Transverse colon (tissue), 4 donors: ENCODE measurements at regions of chr9 and their contacts with region 1.

Region 1: GRCh38 chr9:91949946-91950664 is at the start of gene ROR2:
- DNase-seq: peak; percentile 75
- H3K4me3 ChIP-seq: peak within 1 kb of the TSS; percentile 49 to 91 (median 59)
- H3K27ac ChIP-seq: peak within 1 kb of the TSS; percentile 81 to 94 (median 88)
- H3K4me1 ChIP-seq: peaks cover 5 to 42% (median 31%) of the 10 kb centered on the region in 4 donors
- H3K27me3 ChIP-seq: peaks cover 62% of the 10 kb centered on the region
- CTCF ChIP-seq: peak; percentile 26 to 61 (median 48)
- EP300 ChIP-seq: no peak
- POLR2A ChIP-seq: no peak
- total RNA-seq, gene ROR2: 4.2 to 23.2 (median 11.2) TPM

Region 2: GRCh38 chr9:91727316-91727861 is 222.7 kb before region 1 on chr9:
- in situ Hi-C with region 1: loop called in 1 of 4 experiments (anchors 25 kb)
- intact Hi-C with region 1: no loop called
- DNase-seq: no peak
- H3K4me3 ChIP-seq: no peak overlapping the region
- H3K27ac ChIP-seq: peak overlapping the region in 3 of 4 donors; percentile 0 to 18 (median 1)
- H3K4me1 ChIP-seq: peaks cover 0 to 3% (median 1%) of the 10 kb centered on the region in 4 donors
- H3K27me3 ChIP-seq: peaks cover under 1% of the 10 kb centered on the region
- CTCF ChIP-seq: peak; percentile 60 to 68 (median 64)
- EP300 ChIP-seq: no peak
- POLR2A ChIP-seq: no peak

Region 3: GRCh38 chr9:91766315-91767069 is 183.6 kb before region 1 on chr9:
- in situ Hi-C with region 1: loop called in 2 of 4 experiments (anchors 10 to 25 kb)
- intact Hi-C with region 1: loop called (anchors 5 kb)
- DNase-seq: no peak
- H3K4me3 ChIP-seq: no peak overlapping the region
- H3K27ac ChIP-seq: peak overlapping the region in 3 of 4 donors; percentile 42 to 70 (median 53)
- H3K4me1 ChIP-seq: peaks cover 13 to 31% (median 20%) of the 10 kb centered on the region in 4 donors
- H3K27me3 ChIP-seq: no peaks in the 10 kb centered on the region
- CTCF ChIP-seq: no peak
- EP300 ChIP-seq: no peak
- POLR2A ChIP-seq: no peak

Region 4: DNA sequence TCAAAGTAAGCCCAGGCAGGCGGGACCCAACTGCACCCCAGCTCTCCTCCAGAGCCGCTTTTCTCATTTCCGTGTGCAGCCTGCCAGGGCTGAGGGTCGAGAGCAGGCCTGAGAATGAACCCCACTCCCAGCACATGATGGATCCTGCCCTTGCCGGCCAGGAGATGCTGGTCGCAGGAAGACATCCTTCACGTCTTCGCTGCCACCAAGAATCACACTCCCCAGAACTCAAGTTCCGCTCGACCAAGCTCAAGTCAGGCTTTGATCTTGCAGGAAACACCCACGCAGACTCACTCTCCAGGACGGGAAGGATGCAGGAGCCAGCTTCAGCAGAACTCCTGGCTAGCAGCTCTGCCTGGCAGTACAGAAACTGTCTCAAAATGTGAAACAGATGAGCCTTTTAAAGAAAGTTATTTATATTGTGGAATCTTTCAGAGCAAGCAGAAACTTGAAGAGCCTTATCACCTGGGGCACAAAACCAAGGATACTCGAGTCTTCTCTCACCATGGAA is 102.5 kb before region 1 on chr9:
- in situ Hi-C with region 1: no loop called
- intact Hi-C with region 1: loop called (anchors 10 kb)
- DNase-seq: no peak
- H3K4me3 ChIP-seq: no peak overlapping the region
- H3K27ac ChIP-seq: no peak overlapping the region
- H3K4me1 ChIP-seq: peaks cover 7 to 25% (median 16%) of the 10 kb centered on the region in 4 donors
- H3K27me3 ChIP-seq: no peaks in the 10 kb centered on the region
- CTCF ChIP-seq: no peak
- EP300 ChIP-seq: no peak
- POLR2A ChIP-seq: no peak

Region 5: GRCh38 chr9:92035687-92036410 is 85.7 kb after region 1 on chr9:
- in situ Hi-C with region 1: no loop called
- intact Hi-C with region 1: loop called (anchors 5 kb)
- DNase-seq: peak; percentile 27
- H3K4me3 ChIP-seq: no peak overlapping the region
- H3K27ac ChIP-seq: peak overlapping the region; percentile 60 to 80 (median 76)
- H3K4me1 ChIP-seq: peaks cover 9 to 26% (median 14%) of the 10 kb centered on the region in 4 donors
- H3K27me3 ChIP-seq: no peaks in the 10 kb centered on the region
- CTCF ChIP-seq: no peak
- EP300 ChIP-seq: peak; percentile 67
- POLR2A ChIP-seq: no peak